ENCODE measurements at regions of chr1 and their contacts with region 1.

Region 1: DNA sequence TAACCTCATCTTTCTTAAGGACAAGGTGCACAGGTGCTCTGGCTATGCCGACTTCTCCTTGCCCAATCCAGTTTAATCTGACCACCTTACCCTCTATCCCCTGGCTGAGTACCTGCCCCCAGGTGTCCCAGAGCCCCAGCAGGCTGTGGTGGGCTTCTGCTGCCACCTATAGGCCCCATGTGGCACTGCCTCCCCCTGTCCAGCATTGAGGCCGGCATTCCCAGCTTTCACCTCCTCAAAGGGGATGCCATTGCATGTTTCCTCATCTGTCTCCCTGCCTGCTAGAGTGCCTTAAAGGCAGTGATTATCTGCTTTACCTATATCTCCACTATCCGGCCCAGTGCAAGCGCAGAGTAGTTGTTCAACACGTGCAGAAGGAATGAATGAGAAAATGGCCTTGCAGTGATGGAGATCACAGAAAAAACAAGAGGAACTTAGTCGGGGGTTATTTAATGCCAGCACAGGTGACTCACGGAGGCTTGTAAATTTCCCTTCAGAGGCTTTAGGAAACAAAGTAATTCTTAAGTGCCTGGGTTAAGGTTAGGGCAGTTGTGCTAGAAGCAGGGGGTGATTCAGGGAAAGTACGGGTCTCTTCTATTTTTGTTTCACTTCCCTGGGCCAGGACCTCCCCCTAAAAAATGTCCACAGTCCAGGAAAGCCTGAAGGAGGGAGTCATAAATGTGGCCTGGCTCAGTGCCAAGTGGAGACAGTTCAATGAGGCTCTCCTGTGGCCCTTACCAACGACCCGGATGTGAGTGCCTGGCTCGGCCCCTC is 131.8 kb upstream of the NGF start:
- DNase-seq: no peak
- H3K4me3 ChIP-seq: no peak overlapping the region
- CTCF ChIP-seq: peak; percentile 98

Region 2: DNA sequence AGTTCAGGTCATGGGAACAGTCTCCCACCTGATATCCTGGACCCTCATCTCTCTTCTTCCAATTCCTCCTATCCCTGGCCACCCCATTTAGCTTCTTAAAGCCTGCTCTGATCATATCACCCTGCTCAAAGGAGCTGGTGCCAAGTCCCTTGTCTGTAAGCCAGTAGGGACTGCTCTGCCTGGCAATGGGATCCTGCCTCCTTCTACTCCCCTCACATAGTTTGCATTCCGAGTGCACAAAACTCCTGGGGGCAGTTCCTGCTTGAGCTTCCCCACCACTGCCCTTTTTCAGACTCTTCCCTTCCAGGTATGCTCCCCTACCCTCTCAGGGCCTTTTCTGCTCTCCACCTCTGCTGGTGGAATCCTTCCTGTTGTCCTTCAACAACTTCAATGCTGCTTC is 179.9 kb before region 1 on chr1:
- CTCF ChIA-PET with region 1: interaction called, 12 read pairs
- POLR2A ChIA-PET with region 1: no interaction called
- DNase-seq: no peak
- H3K4me3 ChIP-seq: no peak overlapping the region
- CTCF ChIP-seq: no peak

Region 3: DNA sequence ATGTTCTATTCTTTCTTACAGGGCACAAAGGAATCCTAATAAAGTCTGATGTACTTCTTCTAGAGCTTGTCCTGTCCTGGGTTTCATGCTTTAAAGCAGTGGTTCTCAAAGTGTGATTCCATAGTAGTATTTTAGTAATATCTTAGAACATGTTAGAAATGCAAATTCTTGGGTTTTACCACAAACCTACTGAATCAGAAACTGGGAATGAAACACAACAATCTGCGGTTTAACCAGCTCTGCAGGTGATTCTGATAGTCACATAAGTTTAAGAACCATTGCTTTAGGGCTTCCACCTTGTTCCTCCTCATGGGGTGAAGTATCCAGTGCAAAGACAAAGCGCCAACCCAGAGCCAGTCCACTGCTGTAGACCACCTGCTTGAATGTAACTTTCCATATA is 172.9 kb before region 1 on chr1:
- CTCF ChIA-PET with region 1: interaction called, 15 read pairs
- POLR2A ChIA-PET with region 1: interaction called, 3 read pairs
- DNase-seq: no peak
- H3K4me3 ChIP-seq: no peak overlapping the region
- CTCF ChIP-seq: no peak

Region 4: GRCh38 chr1:115314766-115315165 is 155.1 kb before region 1 on chr1:
- CTCF ChIA-PET with region 1: interaction called, 11 read pairs
- POLR2A ChIA-PET with region 1: no interaction called
- DNase-seq: no peak
- H3K4me3 ChIP-seq: no peak overlapping the region
- CTCF ChIP-seq: no peak

Region 5: DNA sequence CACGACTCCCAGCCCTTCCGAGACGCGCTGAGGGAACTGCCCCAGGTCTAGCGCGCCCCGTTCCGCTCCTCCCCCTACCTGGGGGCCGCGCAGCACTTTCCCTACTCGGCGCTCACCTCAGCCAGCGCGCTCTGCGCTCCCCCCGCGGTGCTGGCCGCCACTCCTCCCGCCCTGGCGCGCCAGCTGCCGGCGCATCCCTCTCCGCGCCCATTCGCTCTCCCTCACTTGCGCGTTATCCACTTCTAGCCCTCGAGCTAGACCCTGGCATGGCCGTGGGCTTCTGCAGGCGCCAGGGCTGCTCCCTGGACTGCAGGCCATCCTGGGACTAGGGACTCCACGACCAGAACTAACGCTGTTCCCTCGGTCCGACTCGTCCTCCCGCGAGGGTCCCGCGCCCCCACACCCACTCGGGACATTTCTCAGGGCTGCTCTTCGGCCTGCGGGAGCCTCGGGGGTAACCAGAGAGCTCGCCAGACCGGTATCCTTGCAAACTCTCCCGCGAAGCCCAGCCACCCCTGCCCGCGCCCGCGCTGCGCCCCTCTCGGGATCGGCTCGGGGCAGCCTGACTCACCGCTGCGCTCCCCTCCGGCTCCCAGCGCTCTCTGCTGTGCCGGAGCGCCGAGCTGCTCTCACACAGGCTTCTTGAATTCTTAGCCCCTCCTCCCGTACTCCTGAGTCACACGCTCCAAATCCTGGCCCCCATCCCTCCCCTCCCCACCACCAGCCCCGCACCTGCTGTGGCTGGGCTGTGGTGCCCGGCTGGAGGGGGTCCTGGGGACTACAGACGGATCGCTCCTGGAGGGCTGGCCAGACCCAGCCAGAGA is 132.0 kb before region 1 on chr1 and contains the start of gene NGF:
- CTCF ChIA-PET with region 1: interaction called, 30 read pairs
- POLR2A ChIA-PET with region 1: no interaction called
- DNase-seq: no peak
- H3K4me3 ChIP-seq: peak within 1 kb of the TSS; percentile 99
- CTCF ChIP-seq: no peak

Region 6: DNA sequence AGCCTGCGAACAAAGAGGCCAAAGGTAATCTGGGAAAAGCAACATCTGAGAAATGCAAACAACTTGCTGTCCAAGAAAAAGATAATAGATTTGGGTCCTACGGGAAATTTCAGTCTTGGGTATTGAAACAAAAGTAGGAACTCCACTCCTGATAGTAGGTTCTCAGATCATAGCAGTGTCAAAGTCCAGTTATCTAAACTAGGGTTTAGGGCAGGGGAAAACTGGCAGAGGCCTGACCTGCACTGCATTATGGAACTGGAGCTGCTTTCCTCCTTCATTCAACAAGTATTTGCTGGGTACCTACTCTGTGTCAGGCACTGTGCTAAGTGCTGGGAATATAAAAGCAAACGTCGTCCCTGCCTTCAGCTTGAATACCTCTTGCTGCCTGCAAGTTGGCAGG is 71.1 kb before region 1 on chr1:
- CTCF ChIA-PET with region 1: no interaction called
- POLR2A ChIA-PET with region 1: no interaction called
- DNase-seq: no peak
- H3K4me3 ChIP-seq: no peak overlapping the region
- CTCF ChIP-seq: no peak

Region 7: GRCh38 chr1:115491298-115492018 is 21.6 kb after region 1 on chr1:
- CTCF ChIA-PET with region 1: interaction called, 10 read pairs
- POLR2A ChIA-PET with region 1: no interaction called
- DNase-seq: no peak
- H3K4me3 ChIP-seq: no peak overlapping the region
- CTCF ChIP-seq: no peak